Common myeloid progenitor, CD34-positive (primary cell): ENCODE measurements at regions of chr3 and their contacts with region 1.

Region 1: DNA sequence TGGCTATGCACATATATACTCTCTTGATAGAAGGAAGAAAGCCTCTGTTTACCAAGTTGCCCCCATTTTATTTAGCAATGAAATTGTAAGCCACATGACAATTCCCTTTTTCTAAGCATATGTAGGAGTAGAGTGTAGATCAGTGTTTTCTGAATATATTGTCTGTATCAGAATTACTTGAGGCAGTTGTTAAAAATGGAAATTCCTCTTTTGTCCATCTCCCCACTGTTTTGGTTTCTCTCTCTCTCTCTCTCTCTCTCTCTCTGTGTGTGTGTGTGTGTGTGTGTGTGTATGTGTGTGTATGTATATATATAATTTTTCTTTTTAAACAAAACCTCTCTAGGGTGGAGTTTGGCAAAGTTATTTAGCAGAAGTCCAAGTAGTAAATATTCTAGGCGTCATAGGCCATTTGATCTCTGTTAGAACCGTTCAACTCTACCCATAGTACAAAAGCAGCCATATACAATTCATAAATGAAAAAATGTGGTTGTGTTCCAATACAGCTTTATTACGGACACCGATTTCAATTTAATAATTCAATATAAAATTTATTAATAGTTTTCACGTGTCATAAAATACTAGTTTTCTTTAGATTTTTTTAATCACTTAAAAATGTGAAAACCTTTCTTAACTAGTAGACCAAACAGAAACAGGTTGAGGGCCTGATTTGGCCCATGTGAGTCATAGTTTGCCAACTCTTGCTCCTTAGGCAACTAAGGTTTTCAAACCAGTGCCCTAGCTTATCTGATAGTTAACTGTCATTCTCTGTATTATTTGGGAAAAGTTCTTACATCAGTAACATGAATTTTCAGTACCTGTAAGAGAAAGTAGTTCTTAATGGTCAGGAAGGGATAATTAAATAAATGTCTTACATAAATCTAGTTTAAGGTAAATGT is 39.8 kb downstream of the UBE2E1 start:
- DNase-seq: peak in 2 of 3 donors; percentile 37 to 48
- H3K4me3 ChIP-seq: no peak overlapping the region
- H3K27ac ChIP-seq: peak overlapping the region in 1 of 2 experiments; percentile 16
- H3K4me1 ChIP-seq: peaks cover 4 to 12% (median 8%) of the 10 kb centered on the region in 4 experiments
- H3K27me3 ChIP-seq: no peaks in the 10 kb centered on the region

Region 2: DNA sequence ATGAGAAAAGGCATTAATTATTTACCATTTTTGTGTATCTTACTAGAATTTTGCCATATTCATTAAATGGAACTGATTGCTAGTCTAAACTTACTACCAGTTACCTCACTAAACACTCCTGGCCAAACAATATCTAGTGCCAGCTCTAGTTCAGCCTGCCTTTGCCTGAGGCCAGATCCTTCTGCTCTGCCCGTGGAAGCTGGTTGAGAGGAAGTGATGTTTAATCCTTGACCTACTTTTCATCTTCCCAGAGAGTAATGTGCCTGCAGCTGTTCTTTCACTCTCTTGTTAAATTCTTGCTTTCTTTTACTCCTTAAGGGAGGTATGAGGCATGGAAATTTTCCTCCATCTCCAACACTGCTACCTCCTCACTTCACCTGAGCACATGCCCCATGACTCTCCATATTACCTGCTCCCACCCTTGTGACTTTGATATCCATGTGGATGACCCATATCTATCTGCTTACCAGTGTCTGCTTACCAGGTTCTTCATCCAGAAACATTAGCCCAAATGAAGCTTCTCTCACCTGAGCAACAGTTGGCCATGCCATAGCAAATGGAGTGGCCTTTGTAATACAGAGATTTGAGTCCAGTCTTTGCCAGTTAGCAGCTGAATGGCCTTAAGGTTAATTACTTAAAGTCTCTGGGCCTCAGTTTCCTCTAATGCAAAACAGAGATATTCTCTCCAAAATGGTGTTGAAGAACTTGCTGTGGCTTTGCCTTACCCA is 13.6 kb after region 1 on chr3:
- CTCF ChIA-PET with region 1: interaction called, 22 read pairs
- POLR2A ChIA-PET with region 1: no interaction called
- DNase-seq: no peak
- H3K4me3 ChIP-seq: no peak overlapping the region
- H3K27ac ChIP-seq: no peak overlapping the region
- H3K4me1 ChIP-seq: peaks cover 18 to 46% (median 32%) of the 10 kb centered on the region in 4 experiments
- H3K27me3 ChIP-seq: no peaks in the 10 kb centered on the region